Heart left ventricle (tissue), 16 donors: ENCODE measurements at regions of chr6 and their contacts with region 1.

Region 1: GRCh38 chr6:96626759-96627364 is 63.9 kb downstream of the FHL5 start:
- DNase-seq: no peak
- ATAC-seq: peak in 3 of 4 donors; percentile 42 to 69 (median 48)
- H3K4me3 ChIP-seq: no peak overlapping the region
- H3K27ac ChIP-seq: no peak overlapping the region
- H3K4me1 ChIP-seq: no peaks in the 10 kb centered on the region
- H3K27me3 ChIP-seq: no peaks in the 10 kb centered on the region
- CTCF ChIP-seq: peak; percentile 19 to 62 (median 42)
- POLR2A ChIP-seq: no peak

Region 2: DNA sequence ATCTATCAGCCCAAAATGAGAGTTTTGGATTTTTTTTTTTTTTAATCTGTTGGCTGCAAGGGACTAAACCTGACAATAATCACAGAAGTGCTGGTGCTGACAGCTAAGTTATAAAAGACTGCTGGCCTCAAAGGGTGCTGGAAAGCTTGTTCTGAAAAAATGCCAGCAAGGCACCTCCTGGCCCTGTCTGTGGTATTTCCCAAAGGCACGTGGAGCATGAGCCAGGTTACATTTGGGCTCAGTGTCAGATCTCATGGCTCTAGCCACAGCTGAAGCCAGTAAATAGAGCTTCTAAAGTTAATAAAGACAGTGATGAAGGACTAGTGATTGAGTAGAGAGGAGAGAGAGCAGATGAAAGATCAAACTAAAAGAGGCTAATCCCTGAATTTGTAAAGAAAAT is 432.2 kb before region 1 on chr6:
- intact Hi-C with region 1: no loop called
- DNase-seq: no peak
- ATAC-seq: no peak
- H3K4me3 ChIP-seq: no peak overlapping the region
- H3K27ac ChIP-seq: no peak overlapping the region
- H3K4me1 ChIP-seq: no peaks in the 10 kb centered on the region
- H3K27me3 ChIP-seq: no peaks in the 10 kb centered on the region
- CTCF ChIP-seq: no peak
- POLR2A ChIP-seq: no peak

Region 3: DNA sequence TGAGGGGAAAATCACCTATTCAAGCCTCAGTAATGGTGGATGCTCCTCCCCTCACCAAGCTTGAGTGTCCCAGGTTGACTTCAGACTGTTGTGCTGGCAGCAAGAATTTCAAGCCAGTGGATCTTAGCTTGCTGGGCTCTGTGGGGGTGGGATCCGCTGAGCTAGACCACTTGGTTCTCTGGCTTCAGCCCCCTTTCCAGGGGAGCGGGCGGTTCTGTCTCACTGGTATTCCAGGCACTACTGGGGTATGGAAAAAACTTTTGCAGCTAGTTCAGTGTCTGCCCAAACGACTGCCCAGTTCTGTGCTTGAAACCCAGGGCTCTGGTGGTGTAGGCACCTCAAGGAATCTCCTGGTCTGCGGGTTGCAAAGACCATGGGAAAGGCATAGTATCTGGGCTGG is 148.2 kb before region 1 on chr6:
- intact Hi-C with region 1: no loop called
- DNase-seq: no peak
- ATAC-seq: no peak
- H3K4me3 ChIP-seq: no peak overlapping the region
- H3K27ac ChIP-seq: no peak overlapping the region
- H3K4me1 ChIP-seq: no peaks in the 10 kb centered on the region
- H3K27me3 ChIP-seq: no peaks in the 10 kb centered on the region
- CTCF ChIP-seq: no peak
- POLR2A ChIP-seq: no peak

Region 4: GRCh38 chr6:96760153-96760687 is 133.4 kb after region 1 on chr6:
- intact Hi-C with region 1: loop called in 3 of 10 experiments (anchors 5 to 10 kb)
- DNase-seq: no peak
- ATAC-seq: no peak
- H3K4me3 ChIP-seq: no peak overlapping the region
- H3K27ac ChIP-seq: no peak overlapping the region
- H3K4me1 ChIP-seq: no peaks in the 10 kb centered on the region
- H3K27me3 ChIP-seq: peaks cover 0 to 3% (median 0%) of the 10 kb centered on the region in 9 donors
- CTCF ChIP-seq: peak in 5 of 12 donors; percentile 5 to 28 (median 22)
- POLR2A ChIP-seq: no peak

Region 5: DNA sequence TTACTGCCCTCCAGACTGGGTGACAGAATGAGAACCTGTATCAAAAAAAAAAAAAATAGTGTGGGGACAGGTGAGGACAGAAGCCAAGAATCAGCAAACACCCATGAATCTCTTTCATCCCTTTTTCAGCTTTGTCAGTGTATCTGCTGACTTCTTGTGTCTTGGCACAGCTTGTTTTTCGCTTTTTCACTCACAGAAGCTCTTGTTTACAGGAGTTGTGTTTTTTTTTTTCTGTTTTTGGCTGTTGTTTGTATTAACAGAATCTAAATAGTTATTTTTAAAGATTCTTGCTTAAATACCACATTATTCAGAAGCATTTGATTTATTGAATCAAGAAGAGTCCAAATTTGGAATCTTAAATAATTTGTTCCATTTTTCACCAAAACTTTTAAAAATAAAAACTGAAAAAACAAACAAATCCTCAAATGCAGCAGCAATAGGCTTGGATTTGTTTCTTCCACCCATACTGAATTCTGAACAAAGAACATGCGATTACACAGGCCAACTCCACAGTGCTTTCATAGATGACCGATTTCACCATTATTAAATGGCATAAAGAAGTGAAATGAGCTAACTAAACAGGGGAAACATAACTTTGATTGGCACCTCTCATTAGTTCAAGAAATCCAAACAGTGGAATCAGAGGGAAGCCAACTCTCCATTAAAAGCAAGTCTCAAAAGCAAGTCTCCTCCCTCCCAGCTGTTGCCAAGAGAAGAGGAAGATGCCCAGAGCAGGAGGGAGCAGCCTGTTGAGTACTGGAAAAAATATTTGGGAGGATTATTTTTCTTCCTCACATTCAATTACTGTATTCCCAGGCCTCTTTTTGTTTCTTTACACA is 237.6 kb after region 1 on chr6:
- intact Hi-C with region 1: no loop called
- DNase-seq: no peak
- ATAC-seq: no peak
- H3K4me3 ChIP-seq: no peak overlapping the region
- H3K27ac ChIP-seq: no peak overlapping the region
- H3K4me1 ChIP-seq: no peaks in the 10 kb centered on the region
- H3K27me3 ChIP-seq: peaks cover 0 to 4% (median 0%) of the 10 kb centered on the region in 9 donors
- CTCF ChIP-seq: no peak
- POLR2A ChIP-seq: no peak

Region 6: GRCh38 chr6:97053643-97054411 is 427.0 kb after region 1 on chr6:
- intact Hi-C with region 1: loop called in 9 of 10 experiments (anchors 2 to 5 kb)
- DNase-seq: no peak
- ATAC-seq: no peak
- H3K4me3 ChIP-seq: no peak overlapping the region
- H3K27ac ChIP-seq: no peak overlapping the region
- H3K4me1 ChIP-seq: peaks cover 0 to 4% (median 0%) of the 10 kb centered on the region in 12 donors
- H3K27me3 ChIP-seq: no peaks in the 10 kb centered on the region
- CTCF ChIP-seq: peak; percentile 33 to 67 (median 54)
- POLR2A ChIP-seq: no peak

Region 7: GRCh38 chr6:97059473-97059872 is 432.6 kb after region 1 on chr6:
- intact Hi-C with region 1: loop called in 9 of 10 experiments (anchors 2 to 5 kb)
- DNase-seq: no peak
- ATAC-seq: no peak
- H3K4me3 ChIP-seq: no peak overlapping the region
- H3K27ac ChIP-seq: no peak overlapping the region
- H3K4me1 ChIP-seq: no peaks in the 10 kb centered on the region
- H3K27me3 ChIP-seq: no peaks in the 10 kb centered on the region
- CTCF ChIP-seq: peak; percentile 19 to 63 (median 52)
- POLR2A ChIP-seq: no peak